Activated T-helper 1 cell treated with anti-CD3 and anti-CD28 coated beads, Interleukin-12 subunit alpha, Interleukin-12 subunit beta, Interleukin-2, Interleukin-4 antibody, amounts not matched to agents 30 ng/mL and 10 ng/mL and 1 ng/mL, durations not matched to agents 14 hours and 24 hours and 36 hours (primary cell): ENCODE measurements at regions of chr12 and their contacts with region 1.

Region 1: DNA sequence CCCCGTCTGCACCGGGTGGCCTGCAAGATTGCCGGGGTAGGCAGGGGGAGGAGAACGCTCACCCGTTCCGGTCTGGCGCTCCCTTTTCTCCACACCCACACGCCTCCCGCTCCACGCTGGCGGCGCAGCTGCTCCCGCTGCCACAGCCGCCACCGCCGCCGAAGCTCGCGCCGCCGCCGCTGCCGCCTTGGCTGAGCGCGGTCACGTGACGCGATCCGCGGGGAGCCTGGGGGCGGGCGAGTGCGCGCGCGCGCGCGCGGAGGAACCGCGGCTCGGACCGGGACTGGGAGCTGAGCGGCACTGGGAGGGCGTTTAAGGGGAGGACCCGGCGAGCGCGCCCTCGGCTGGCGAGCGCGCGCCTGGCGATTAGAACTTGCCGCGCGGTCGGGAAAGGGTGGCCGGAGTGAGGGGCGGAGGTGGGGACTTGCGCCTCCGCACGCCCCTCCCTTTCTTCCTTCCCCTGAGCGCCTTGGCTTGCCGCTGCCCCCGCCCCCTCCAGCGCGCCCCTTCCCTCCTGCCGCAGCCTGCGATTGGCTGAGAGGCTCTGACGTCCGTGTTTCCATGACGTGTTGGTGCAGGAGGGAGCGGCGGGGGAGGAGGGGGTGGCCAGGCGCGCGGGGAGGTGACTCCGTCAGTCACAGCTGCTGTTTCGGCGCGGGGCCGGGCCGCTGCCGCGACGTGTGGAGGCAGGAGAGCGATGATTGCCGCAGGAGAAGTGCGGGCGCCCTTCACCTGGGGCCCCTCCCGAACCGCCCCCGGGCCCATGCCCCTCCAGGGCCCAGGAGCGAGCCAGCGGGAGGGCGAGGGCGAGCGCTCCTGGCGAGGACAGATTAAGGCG is 738 bp upstream of the ATP2B1 start:
- DNase-seq: peak; percentile 97
- H3K4me3 Mint-ChIP-seq: peak overlapping the region; percentile 81
- H3K27ac Mint-ChIP-seq: peak overlapping the region; percentile 91
- H3K4me1 Mint-ChIP-seq: peaks cover 26% of the 10 kb centered on the region
- H3K27me3 Mint-ChIP-seq: peaks cover 31% of the 10 kb centered on the region

Region 2: GRCh38 chr12:89352492-89353187 is 356.7 kb before region 1 on chr12 and contains the start of gene DUSP6:
- intact Hi-C with region 1: loop called (anchors 1 kb)
- DNase-seq: peak; percentile 92
- H3K4me3 Mint-ChIP-seq: peak within 1 kb of the TSS; percentile 98
- H3K27ac Mint-ChIP-seq: peak within 1 kb of the TSS; percentile 97
- H3K4me1 Mint-ChIP-seq: peaks cover 46% of the 10 kb centered on the region
- H3K27me3 Mint-ChIP-seq: peaks cover 3% of the 10 kb centered on the region
- total RNA-seq, gene DUSP6: 108 and 115 TPM in 2 replicates

Region 3: GRCh38 chr12:89542912-89543592 is 166.3 kb before region 1 on chr12:
- intact Hi-C with region 1: loop called (anchors 2 kb)
- DNase-seq: peak; percentile 43
- H3K4me3 Mint-ChIP-seq: no peak overlapping the region
- H3K27ac Mint-ChIP-seq: no peak overlapping the region
- H3K4me1 Mint-ChIP-seq: peaks cover 10% of the 10 kb centered on the region
- H3K27me3 Mint-ChIP-seq: no peaks in the 10 kb centered on the region

Region 4: GRCh38 chr12:89685363-89685972 is 23.9 kb before region 1 on chr12:
- intact Hi-C with region 1: no loop called
- DNase-seq: no peak
- H3K4me3 Mint-ChIP-seq: no peak overlapping the region
- H3K27ac Mint-ChIP-seq: no peak overlapping the region
- H3K4me1 Mint-ChIP-seq: no peaks in the 10 kb centered on the region
- H3K27me3 Mint-ChIP-seq: peaks cover 2% of the 10 kb centered on the region

Region 5: GRCh38 chr12:89756585-89757321 is 47.4 kb after region 1 on chr12:
- intact Hi-C with region 1: loop called (anchors 1 kb)
- DNase-seq: peak; percentile 35
- H3K4me3 Mint-ChIP-seq: peak overlapping the region; percentile 3
- H3K27ac Mint-ChIP-seq: peak overlapping the region; percentile 81
- H3K4me1 Mint-ChIP-seq: peaks cover 29% of the 10 kb centered on the region
- H3K27me3 Mint-ChIP-seq: no peaks in the 10 kb centered on the region

Region 6: DNA sequence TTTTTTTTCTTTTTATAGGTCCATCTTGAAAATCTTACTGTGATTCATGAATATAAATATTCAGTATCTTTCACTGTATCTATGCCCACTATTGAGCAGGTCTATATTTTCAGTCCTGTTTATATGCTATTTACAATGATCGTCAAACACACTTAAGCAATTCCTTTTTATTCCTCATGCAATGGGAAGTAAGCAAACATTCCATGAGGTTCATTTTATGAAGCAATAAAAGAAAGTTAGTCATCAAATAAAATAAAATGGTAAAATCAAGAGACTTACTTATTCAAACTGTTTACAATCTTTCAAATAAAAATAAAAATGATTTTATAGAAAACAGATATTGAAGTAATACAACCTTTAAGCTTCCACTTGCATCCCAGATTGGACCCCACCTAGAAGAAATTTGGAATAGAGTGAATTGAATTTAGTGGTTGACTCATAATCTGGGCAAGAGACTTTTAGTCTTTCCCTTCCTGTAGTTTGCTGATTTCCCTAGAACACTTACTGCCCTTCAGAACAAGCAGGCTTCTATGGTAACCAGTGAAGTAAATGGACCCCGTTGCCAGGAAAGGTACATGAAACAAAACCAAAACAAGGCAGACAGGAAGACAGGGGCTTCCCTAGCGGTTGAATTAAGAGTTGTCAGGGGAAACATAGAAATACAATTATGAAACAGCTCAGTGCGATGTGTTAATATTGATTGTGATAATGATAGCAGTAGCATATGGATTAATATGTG is 240.2 kb after region 1 on chr12:
- intact Hi-C with region 1: loop called (anchors 1 kb)
- DNase-seq: peak; percentile 51
- H3K4me3 Mint-ChIP-seq: no peak overlapping the region
- H3K27ac Mint-ChIP-seq: no peak overlapping the region
- H3K4me1 Mint-ChIP-seq: peaks cover 33% of the 10 kb centered on the region
- H3K27me3 Mint-ChIP-seq: no peaks in the 10 kb centered on the region